OCI-LY7 (cell line): ENCODE measurements at regions of chr5 and their contacts with region 1.

Region 1: DNA sequence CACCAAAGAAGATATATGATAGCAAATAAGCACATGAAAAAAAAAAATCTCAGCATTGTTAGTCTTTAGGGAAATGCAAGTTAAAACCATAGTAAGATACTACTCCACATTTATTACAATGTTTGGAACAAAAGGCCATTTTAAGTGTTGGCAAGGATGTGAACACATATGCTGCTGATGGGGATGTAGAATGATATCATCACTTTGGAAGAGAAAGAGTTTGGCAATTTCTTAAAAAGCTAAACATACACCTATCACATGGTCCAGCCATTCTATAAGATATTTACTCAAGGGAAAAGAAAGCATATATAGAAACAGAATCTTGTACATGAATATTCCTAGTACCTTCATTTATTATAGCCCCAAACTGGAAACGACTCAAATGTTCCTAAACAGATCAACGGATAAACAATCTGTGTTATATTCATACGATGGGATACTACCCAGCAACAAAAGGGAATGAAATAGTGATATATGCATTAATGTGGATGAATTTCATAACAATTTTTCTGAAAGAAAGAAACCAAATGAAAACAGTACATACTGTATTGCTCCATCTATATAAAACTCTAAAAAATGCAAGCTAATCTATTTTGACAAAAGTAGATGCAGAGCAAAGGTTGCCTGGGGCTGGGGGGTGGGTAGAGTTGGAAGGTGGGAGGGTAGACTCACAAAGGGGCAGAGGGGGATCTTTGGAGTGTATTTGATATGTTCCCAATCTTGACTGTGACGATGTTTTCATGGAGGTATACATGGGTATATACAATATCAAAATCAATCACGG is 45.7 kb upstream of the SMAD5 start:
- DNase-seq: no peak
- H3K4me3 ChIP-seq: no peak overlapping the region
- H3K27ac ChIP-seq: no peak overlapping the region
- H3K4me1 ChIP-seq: peaks cover 3% of the 10 kb centered on the region
- CTCF ChIP-seq: no peak

Region 2: GRCh38 chr5:136037001-136037705 is 49.8 kb before region 1 on chr5:
- CTCF ChIA-PET with region 1: interaction called, 10 read pairs
- POLR2A ChIA-PET with region 1: no interaction called
- intact Hi-C with region 1: no loop called
- DNase-seq: peak; percentile 90
- H3K4me3 ChIP-seq: peak overlapping the region; percentile 36
- H3K27ac ChIP-seq: peak overlapping the region; percentile 93
- H3K4me1 ChIP-seq: peaks cover 78% of the 10 kb centered on the region
- CTCF ChIP-seq: no peak

Region 3: DNA sequence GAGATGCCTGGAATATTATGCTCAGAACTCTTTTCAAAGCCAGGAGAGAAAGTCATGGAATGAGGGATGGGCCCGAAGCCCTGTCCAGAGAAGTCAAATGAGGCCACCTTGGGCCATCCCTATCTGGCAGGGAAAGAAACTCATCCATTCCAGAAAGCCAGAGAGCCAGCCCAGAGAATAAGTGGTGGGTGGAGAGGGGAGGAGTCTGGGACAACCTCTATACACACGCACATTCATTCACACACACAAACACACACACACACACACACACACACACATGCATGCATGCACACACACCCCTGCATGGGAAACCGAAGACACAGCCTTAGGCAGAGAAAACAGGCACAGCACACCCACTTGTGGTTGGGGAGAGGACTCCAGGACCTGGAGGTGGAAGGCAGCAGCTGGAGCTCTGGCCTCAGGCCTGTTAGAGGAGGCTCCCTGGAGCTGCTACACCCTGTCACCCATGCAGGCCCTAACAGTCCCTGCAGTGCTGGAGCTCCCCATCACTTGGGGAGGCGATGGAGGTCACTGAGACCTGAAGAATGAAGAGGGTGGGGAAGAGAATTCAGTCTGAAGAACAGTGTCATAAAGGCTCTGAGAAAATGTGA is 20.2 kb before region 1 on chr5:
- CTCF ChIA-PET with region 1: no interaction called
- POLR2A ChIA-PET with region 1: no interaction called
- intact Hi-C with region 1: no loop called
- DNase-seq: peak; percentile 24
- H3K4me3 ChIP-seq: no peak overlapping the region
- H3K27ac ChIP-seq: no peak overlapping the region
- H3K4me1 ChIP-seq: peaks cover 19% of the 10 kb centered on the region
- CTCF ChIP-seq: no peak; the same call in 1 of the 2 replicates